ENCODE measurements at regions of chr4 and their contacts with region 1.

Region 1: GRCh38 chr4:143482840-143483239 is 30.7 kb upstream of the SMARCA5 start:
- DNase-seq: peak in 1 of 2 experiments; percentile 42
- H3K4me3 ChIP-seq: no peak overlapping the region
- H3K4me3 Mint-ChIP-seq: no peak overlapping the region
- H3K27ac Mint-ChIP-seq: no peak overlapping the region
- H3K4me1 ChIP-seq: no peaks in the 10 kb centered on the region
- H3K4me1 Mint-ChIP-seq: no peaks in the 10 kb centered on the region
- H3K27me3 ChIP-seq: no peaks in the 10 kb centered on the region
- H3K27me3 Mint-ChIP-seq: no peaks in the 10 kb centered on the region
- CTCF ChIP-seq: peak; percentile 40 to 46

Region 2: DNA sequence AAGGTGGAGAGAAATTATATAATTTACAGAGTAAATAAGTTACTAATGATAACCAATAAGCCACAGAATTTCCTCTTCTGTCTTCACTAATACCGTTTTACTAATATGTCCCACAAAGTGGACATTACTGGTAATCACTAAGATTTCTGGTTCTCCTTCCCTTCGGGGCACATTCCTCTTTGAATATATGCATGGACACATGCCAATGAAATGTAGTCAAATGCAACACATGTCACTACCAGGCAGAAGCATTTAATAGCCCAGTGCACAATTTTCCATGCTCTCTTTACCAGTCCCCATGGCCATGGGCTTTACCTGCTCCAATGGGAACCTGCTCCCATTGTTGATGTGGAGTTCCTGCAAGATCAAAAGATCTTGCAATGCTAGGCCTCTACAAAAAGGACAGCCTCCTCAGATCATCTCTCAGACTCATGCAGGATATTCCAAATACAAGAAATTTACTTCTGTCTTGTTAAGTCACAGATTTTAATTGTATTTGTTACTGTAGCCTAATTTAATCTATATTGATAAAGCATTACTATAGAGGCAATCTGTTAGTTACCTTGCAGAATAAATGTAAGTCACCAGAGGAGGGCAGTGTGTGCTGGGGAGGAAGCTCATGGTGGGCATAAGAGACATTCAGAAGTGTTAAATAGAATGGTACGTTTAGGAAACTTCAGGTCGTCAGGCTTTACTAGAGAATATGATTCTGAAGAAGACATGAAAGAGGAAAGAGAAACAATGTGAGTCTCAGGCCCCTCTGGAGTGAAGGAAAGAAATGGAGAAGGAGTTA is 599.6 kb before region 1 on chr4:
- CTCF ChIA-PET with region 1: no interaction called
- POLR2A ChIA-PET with region 1: no interaction called
- intact Hi-C with region 1: loop called (anchors 1 kb)
- DNase-seq: peak in 1 of 2 experiments; percentile 15
- H3K4me3 ChIP-seq: no peak overlapping the region
- H3K4me3 Mint-ChIP-seq: no peak overlapping the region
- H3K27ac Mint-ChIP-seq: no peak overlapping the region
- H3K4me1 ChIP-seq: no peaks in the 10 kb centered on the region
- H3K4me1 Mint-ChIP-seq: no peaks in the 10 kb centered on the region
- H3K27me3 ChIP-seq: no peaks in the 10 kb centered on the region
- H3K27me3 Mint-ChIP-seq: no peaks in the 10 kb centered on the region
- CTCF ChIP-seq: peak; percentile 22 to 37

Region 3: GRCh38 chr4:142984871-142985585 is 497.8 kb before region 1 on chr4:
- CTCF ChIA-PET with region 1: no interaction called
- POLR2A ChIA-PET with region 1: no interaction called
- intact Hi-C with region 1: loop called (anchors 1 kb)
- DNase-seq: peak in 1 of 2 experiments; percentile 64
- H3K4me3 ChIP-seq: no peak overlapping the region
- H3K4me3 Mint-ChIP-seq: no peak overlapping the region
- H3K27ac Mint-ChIP-seq: no peak overlapping the region
- H3K4me1 ChIP-seq: no peaks in the 10 kb centered on the region
- H3K4me1 Mint-ChIP-seq: peaks cover 13% of the 10 kb centered on the region
- H3K27me3 ChIP-seq: no peaks in the 10 kb centered on the region
- H3K27me3 Mint-ChIP-seq: no peaks in the 10 kb centered on the region
- CTCF ChIP-seq: peak; percentile 61 to 71

Region 4: DNA sequence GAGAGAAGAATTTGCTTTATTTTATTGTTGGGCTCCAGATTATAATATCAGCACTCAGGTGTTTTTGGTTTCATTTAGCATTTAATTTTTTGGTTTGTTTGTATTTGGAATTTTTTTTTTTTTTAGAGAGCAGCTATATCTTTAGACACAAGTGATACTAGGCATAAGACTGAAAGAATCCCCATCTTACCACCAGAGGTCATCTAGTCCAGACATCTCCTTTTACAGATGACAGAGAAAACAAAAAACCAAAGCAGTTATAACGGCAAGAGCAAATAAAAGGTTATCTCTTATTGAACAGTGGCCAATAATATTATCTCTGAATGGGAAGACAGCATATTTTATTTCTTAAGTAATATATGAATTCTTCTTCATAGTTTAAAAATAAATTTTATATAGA is 275.3 kb before region 1 on chr4:
- CTCF ChIA-PET with region 1: no interaction called
- POLR2A ChIA-PET with region 1: no interaction called
- intact Hi-C with region 1: loop called (anchors 1 kb)
- DNase-seq: peak in 1 of 2 experiments; percentile 28
- H3K4me3 ChIP-seq: no peak overlapping the region
- H3K4me3 Mint-ChIP-seq: no peak overlapping the region
- H3K27ac Mint-ChIP-seq: no peak overlapping the region
- H3K4me1 ChIP-seq: no peaks in the 10 kb centered on the region
- H3K4me1 Mint-ChIP-seq: no peaks in the 10 kb centered on the region
- H3K27me3 ChIP-seq: no peaks in the 10 kb centered on the region
- H3K27me3 Mint-ChIP-seq: no peaks in the 10 kb centered on the region
- CTCF ChIP-seq: peak; percentile 35 to 45

Region 5: DNA sequence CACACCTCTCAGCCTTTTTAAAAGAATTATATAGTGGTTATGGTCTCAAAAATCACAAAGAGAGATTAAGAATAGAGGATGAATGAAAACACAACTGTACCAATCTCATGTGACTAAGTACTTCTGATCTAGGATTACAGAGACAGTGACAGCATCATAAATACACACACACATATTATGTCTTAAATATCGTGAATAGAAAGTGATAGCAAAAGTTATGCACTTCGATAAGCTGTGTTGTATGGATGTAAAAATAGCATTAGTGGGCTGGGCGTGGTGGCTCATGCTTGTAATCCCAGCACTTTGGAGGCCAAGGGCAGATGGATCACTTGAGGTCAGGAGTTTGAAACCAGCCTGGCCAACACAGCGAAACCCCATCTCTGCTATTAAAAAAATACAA is 632.7 kb after region 1 on chr4:
- CTCF ChIA-PET with region 1: no interaction called
- POLR2A ChIA-PET with region 1: no interaction called
- intact Hi-C with region 1: no loop called
- DNase-seq: no peak
- H3K4me3 ChIP-seq: no peak overlapping the region
- H3K4me3 Mint-ChIP-seq: no peak overlapping the region
- H3K27ac Mint-ChIP-seq: no peak overlapping the region
- H3K4me1 ChIP-seq: no peaks in the 10 kb centered on the region
- H3K4me1 Mint-ChIP-seq: no peaks in the 10 kb centered on the region
- H3K27me3 ChIP-seq: no peaks in the 10 kb centered on the region
- H3K27me3 Mint-ChIP-seq: no peaks in the 10 kb centered on the region
- CTCF ChIP-seq: no peak

Measured in Caco-2 (cell line).